ENCODE measurements at regions of chr12 and their contacts with region 1.

Region 1: GRCh38 chr12:2291182-2291832 is 238.5 kb downstream of the CACNA1C start:
- DNase-seq: no peak
- ATAC-seq: no peak
- H3K4me3 ChIP-seq: no peak overlapping the region
- H3K27ac ChIP-seq: no peak overlapping the region
- H3K4me1 ChIP-seq: peaks cover 38% of the 10 kb centered on the region
- H3K27me3 ChIP-seq: no peaks in the 10 kb centered on the region
- CTCF ChIP-seq: peak; percentile 45
- POLR2A ChIP-seq: no peak
- RAD21 ChIP-seq: peak; percentile 46

Region 2: GRCh38 chr12:2332947-2333346 is 41.6 kb after region 1 on chr12:
- CTCF ChIA-PET with region 1: interaction called, 4 read pairs
- POLR2A ChIA-PET with region 1: no interaction called
- dilution Hi-C with region 1: no loop called
- in situ Hi-C with region 1: no loop called
- intact Hi-C with region 1: loop called (anchors 1 kb)
- DNase-seq: peak; percentile 61
- ATAC-seq: no peak
- H3K4me3 ChIP-seq: no peak overlapping the region
- H3K27ac ChIP-seq: peak overlapping the region; percentile 62; the same call in 1 of the 2 replicates
- H3K4me1 ChIP-seq: peaks cover 31% of the 10 kb centered on the region
- H3K27me3 ChIP-seq: no peaks in the 10 kb centered on the region
- CTCF ChIP-seq: no peak
- POLR2A ChIP-seq: no peak
- RAD21 ChIP-seq: no peak